Activated naive CD8-positive, alpha-beta T cell treated with anti-CD3 and anti-CD28 coated beads, Interleukin-2, amount 10 ng/mL, durations not matched to agents 7 days and 5 days (primary cell): ENCODE measurements at regions of chr20 and their contacts with region 1.

Region 1: GRCh38 chr20:56468316-56469082 is at the start of gene RTF2:
- DNase-seq: peak; percentile 99
- ATAC-seq: peak; percentile 94
- H3K4me3 Mint-ChIP-seq: peak within 1 kb of the TSS; percentile 100
- H3K27ac Mint-ChIP-seq: peak within 1 kb of the TSS; percentile 99
- H3K4me1 Mint-ChIP-seq: peaks cover 31% of the 10 kb centered on the region
- H3K27me3 Mint-ChIP-seq: no peaks in the 10 kb centered on the region
- total RNA-seq, gene RTF2: 99.8 to 101 TPM

Region 2: DNA sequence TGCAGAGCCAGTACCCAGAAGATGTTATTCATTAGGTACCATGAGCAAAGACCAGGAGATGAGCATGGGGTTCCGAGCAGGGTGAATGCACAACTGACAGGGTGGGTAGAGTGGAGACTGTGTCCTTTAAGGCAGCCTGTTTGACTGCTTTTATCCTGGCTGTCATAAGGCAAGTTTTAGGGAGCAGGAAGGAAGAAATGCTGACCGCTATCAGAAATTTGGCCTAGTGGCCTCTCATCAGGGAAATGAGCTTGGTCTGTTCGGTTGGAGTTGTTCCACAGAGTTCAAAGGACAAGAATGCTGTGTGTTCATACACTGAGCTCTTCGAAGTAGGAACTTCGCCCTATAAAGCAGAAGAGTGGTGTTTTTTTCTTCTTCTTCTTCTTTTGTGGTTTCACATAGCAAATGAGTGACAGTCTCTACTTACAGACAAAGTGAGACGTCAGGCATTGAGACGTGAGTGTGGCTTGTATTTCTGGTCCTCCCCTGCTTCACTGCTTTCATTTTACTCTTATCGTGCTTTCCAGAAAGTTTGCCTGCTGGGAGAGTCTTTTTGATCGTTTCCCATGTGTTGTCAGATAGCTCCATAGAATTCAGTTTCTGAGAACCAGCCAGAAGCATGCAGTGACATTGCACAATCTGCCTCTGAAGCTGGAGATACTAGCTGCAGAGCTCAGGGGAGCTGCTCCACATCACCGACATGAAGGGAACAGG is 56.6 kb before region 1 on chr20 and contains the start of gene CASS4:
- POLR2A ChIA-PET with region 1: interaction called, 18 read pairs
- DNase-seq: peak; percentile 53
- ATAC-seq: peak; percentile 79
- H3K4me3 Mint-ChIP-seq: peak within 1 kb of the TSS; percentile 95
- H3K27ac Mint-ChIP-seq: peak within 1 kb of the TSS; percentile 98
- H3K4me1 Mint-ChIP-seq: peaks cover 47% of the 10 kb centered on the region
- H3K27me3 Mint-ChIP-seq: no peaks in the 10 kb centered on the region
- total RNA-seq, gene CASS4: 14.2 to 18.7 TPM